ENCODE measurements at regions of chr22 and their contacts with region 1.

Region 1: GRCh38 chr22:30356449-30357235 is at the starts of genes CCDC157 and SF3A1:
- DNase-seq: peak; percentile 98
- H3K4me3 Mint-ChIP-seq: peak within 1 kb of the TSS; percentile 95
- H3K27ac Mint-ChIP-seq: peak within 1 kb of the TSS; percentile 92
- H3K4me1 Mint-ChIP-seq: peaks cover 31% of the 10 kb centered on the region
- H3K27me3 Mint-ChIP-seq: peaks cover 2% of the 10 kb centered on the region
- total RNA-seq, gene CCDC157: 2.9 and 3.2 TPM in 2 replicates
- total RNA-seq, gene SF3A1: 314 and 319 TPM in 2 replicates

Region 2: GRCh38 chr22:30062950-30063349 is 293.7 kb before region 1 on chr22:
- intact Hi-C with region 1: no loop called
- DNase-seq: no peak
- H3K4me3 Mint-ChIP-seq: no peak overlapping the region
- H3K27ac Mint-ChIP-seq: no peak overlapping the region
- H3K4me1 Mint-ChIP-seq: no peaks in the 10 kb centered on the region
- H3K27me3 Mint-ChIP-seq: peaks cover 14% of the 10 kb centered on the region

Region 3: GRCh38 chr22:30305519-30305905 is 51.1 kb before region 1 on chr22:
- intact Hi-C with region 1: loop called (anchors 1 kb)
- DNase-seq: peak; percentile 92
- H3K4me3 Mint-ChIP-seq: peak overlapping the region; percentile 73
- H3K27ac Mint-ChIP-seq: peak overlapping the region; percentile 91
- H3K4me1 Mint-ChIP-seq: peaks cover 91% of the 10 kb centered on the region
- H3K27me3 Mint-ChIP-seq: no peaks in the 10 kb centered on the region

Region 4: DNA sequence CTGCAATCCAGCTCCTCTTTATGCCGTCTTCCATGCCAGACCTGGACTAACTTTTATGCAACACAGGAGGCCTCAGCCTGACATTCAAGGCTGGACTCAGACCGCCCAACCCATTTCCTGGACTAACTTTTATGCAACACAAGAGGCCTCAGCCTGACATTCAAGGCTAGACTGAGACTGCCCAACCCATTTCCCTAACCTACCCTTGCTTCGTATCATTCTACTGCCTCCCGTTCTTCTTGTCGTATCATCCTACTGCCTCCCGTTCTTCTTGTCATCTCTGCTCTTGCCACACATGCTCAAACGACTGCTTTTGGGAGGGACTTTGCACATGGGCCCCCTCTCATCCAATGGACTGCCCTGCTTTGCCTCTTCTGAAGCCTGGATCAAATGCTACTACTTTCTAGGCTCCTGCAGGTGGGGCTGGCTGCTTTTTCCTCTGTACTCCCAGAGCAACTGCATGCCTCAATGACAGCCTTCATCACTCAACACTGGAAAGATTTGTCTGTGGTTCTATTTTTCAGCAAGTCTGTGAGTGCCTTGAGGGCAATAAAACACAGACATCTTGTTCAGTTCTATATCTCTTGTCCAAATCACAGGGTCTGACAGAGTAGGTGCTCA is 37.7 kb before region 1 on chr22:
- intact Hi-C with region 1: no loop called
- DNase-seq: no peak
- H3K4me3 Mint-ChIP-seq: no peak overlapping the region
- H3K27ac Mint-ChIP-seq: peak overlapping the region; percentile 26
- H3K4me1 Mint-ChIP-seq: peaks cover 77% of the 10 kb centered on the region
- H3K27me3 Mint-ChIP-seq: no peaks in the 10 kb centered on the region

Region 5: GRCh38 chr22:30380011-30380410 is 23.4 kb after region 1 on chr22:
- intact Hi-C with region 1: no loop called
- DNase-seq: no peak
- H3K4me3 Mint-ChIP-seq: no peak overlapping the region
- H3K27ac Mint-ChIP-seq: no peak overlapping the region
- H3K4me1 Mint-ChIP-seq: no peaks in the 10 kb centered on the region
- H3K27me3 Mint-ChIP-seq: no peaks in the 10 kb centered on the region

Region 6: DNA sequence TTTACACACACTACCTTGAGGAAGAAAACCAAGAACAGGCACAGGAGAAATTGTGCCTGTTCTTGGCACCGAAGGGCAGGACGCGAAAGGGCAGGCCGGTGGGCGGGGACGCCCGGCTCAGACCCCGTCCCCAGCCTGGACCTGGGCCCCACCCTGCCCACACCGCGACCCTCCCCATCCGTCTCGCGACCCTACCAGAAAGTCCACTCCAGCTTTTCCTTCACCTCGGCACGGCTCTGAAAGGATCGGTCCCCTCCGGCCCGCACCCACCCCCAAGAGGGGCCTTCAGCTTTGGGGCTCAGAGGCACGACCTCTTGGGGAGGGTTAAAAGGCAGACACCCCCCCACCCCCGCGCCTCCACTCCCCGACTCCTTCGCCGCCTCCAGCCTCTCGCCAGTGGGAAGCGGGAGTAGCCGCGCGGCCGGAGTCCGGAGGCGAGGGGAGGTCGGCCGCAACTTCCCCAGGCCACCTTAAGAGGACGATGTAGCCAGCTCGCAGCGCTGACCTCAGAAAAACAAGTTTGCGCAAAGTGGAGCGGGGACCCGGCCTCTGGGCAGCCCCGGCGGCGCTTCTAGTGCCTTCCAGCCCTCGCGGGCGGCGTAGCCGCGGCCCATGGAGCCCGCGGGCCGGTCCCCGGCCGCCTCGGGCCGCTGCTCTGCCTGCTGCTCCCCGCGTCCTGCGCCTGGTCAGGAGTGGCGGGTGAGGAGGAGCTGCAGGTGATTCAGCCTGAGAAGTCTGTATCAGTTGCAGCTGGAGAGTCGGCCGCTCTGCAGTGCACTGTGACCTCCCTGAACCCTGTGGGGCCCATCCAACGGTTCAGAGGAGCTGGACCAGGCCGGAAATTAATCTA is 185.5 kb after region 1 on chr22:
- intact Hi-C with region 1: no loop called
- DNase-seq: no peak
- H3K4me3 Mint-ChIP-seq: no peak overlapping the region
- H3K27ac Mint-ChIP-seq: no peak overlapping the region
- H3K4me1 Mint-ChIP-seq: no peaks in the 10 kb centered on the region
- H3K27me3 Mint-ChIP-seq: peaks cover 29% of the 10 kb centered on the region